Activated CD4-positive, alpha-beta T cell treated with anti-CD3 and anti-CD28 coated beads, Interleukin-2, amount 10 ng/mL, durations not matched to agents 24 days and 14 days (primary cell): ENCODE measurements at regions of chr10 and their contacts with region 1.

Region 1: GRCh38 chr10:75210282-75211006 is at the start of gene VDAC2:
- DNase-seq: peak; percentile 99
- H3K4me3 Mint-ChIP-seq: peak within 1 kb of the TSS; percentile 96
- H3K27ac Mint-ChIP-seq: peak within 1 kb of the TSS; percentile 100
- H3K4me1 Mint-ChIP-seq: peaks cover 34% of the 10 kb centered on the region
- H3K27me3 Mint-ChIP-seq: no peaks in the 10 kb centered on the region
- total RNA-seq, gene VDAC2: 245 and 249 TPM in 2 replicates

Region 2: DNA sequence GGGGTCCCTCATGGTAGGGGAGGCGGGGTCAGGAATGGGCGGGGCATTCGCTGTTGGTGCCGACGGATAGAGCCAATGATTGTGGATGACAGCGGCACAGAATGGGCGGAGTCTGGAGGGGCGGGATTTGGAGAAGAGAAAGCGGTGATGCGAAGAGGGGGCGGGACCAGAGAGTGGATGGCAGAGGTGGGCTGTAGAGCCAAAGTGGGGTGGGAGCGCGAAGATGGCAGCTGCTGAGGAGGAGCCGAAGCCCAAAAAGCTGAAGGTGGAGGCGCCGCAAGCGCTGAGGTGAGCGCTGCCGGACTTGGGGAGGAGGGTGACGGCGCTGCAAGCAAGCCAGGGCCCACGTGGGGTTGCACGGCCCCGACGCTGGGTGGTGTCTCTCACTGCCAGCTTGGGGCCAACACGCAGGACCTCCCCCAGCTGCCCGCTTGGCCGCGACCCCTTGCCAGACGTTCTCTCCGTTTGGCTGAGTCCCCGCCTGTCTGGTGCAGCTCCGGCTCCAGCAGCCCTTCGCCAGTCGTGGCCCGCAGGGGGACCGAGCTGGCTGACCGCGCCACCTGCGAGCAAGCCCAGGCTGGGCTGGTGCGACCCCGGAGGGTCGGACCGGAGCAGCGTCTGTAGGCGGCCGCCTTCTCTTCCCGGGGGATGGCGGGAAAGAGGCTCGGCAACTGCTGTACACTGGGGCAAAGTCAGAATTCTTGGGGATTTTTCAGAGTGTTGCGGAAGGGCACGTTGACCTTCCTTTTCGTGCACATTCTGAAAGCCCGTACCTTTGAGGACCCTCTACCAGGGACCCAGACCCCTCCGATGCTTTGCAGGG is 1059.2 kb before region 1 on chr10 and contains the start of gene ADK:
- intact Hi-C with region 1: loop called (anchors 1 kb)
- DNase-seq: peak; percentile 100
- H3K4me3 Mint-ChIP-seq: no peak within 1 kb of the TSS
- H3K27ac Mint-ChIP-seq: no peak within 1 kb of the TSS
- H3K4me1 Mint-ChIP-seq: peaks cover 28% of the 10 kb centered on the region
- H3K27me3 Mint-ChIP-seq: no peaks in the 10 kb centered on the region
- total RNA-seq, gene ADK: 54.8 and 58.3 TPM in 2 replicates

Region 3: DNA sequence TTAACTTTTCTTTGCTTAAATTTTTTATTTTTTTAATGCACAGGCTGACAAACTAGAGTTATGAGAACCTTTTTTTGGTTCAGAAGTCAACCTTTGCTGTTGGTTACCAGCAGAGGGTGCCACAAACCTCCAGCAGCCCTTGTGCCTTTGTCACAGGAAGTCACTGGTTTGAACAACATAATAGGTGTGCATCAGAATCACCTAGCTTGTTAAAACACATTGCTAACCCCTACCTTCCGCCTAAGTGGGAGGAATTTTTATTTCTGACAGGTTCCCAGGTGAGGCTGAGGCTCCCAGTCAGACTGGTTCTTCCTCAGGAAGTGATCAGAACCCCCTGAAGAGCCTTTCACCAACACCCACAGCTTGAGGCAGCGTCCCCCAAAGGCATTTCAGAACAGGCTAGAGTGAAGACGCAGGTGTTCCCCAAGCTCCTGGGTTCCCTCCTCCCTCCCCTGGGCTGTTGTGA is 22.4 kb before region 1 on chr10:
- intact Hi-C with region 1: loop called (anchors 1 kb)
- DNase-seq: peak; percentile 89
- H3K4me3 Mint-ChIP-seq: no peak overlapping the region
- H3K27ac Mint-ChIP-seq: peak overlapping the region; percentile 15
- H3K4me1 Mint-ChIP-seq: peaks cover 12% of the 10 kb centered on the region
- H3K27me3 Mint-ChIP-seq: no peaks in the 10 kb centered on the region

Region 4: DNA sequence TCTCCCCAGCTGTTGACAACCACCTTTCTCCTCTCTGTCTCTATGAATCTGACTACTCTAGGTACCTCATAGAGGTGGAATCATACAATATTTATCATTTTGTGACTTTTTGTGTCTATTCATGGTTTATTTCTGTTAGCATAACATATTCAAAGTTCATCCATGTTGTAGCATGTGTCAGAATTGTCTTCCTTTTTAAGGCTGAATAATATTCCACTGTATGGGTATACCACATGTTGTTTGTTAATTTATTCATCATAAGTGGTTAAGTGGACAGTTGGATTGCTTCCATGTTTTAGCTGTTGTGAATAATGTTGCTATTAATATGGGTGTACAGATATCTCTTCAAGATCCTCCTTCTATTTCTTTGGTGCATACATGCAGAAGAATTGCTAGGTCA is 95.2 kb after region 1 on chr10:
- intact Hi-C with region 1: no loop called
- DNase-seq: no peak
- H3K4me3 Mint-ChIP-seq: no peak overlapping the region
- H3K27ac Mint-ChIP-seq: no peak overlapping the region
- H3K4me1 Mint-ChIP-seq: no peaks in the 10 kb centered on the region
- H3K27me3 Mint-ChIP-seq: peaks cover 4% of the 10 kb centered on the region

Region 5: GRCh38 chr10:75514830-75515229 is 304.4 kb after region 1 on chr10:
- intact Hi-C with region 1: no loop called
- DNase-seq: no peak
- H3K4me3 Mint-ChIP-seq: no peak overlapping the region
- H3K27ac Mint-ChIP-seq: no peak overlapping the region
- H3K4me1 Mint-ChIP-seq: peaks cover 3% of the 10 kb centered on the region
- H3K27me3 Mint-ChIP-seq: peaks cover 7% of the 10 kb centered on the region